Body of pancreas (tissue), 4 donors: ENCODE measurements at regions of chr9 and their contacts with region 1.

Region 1: DNA sequence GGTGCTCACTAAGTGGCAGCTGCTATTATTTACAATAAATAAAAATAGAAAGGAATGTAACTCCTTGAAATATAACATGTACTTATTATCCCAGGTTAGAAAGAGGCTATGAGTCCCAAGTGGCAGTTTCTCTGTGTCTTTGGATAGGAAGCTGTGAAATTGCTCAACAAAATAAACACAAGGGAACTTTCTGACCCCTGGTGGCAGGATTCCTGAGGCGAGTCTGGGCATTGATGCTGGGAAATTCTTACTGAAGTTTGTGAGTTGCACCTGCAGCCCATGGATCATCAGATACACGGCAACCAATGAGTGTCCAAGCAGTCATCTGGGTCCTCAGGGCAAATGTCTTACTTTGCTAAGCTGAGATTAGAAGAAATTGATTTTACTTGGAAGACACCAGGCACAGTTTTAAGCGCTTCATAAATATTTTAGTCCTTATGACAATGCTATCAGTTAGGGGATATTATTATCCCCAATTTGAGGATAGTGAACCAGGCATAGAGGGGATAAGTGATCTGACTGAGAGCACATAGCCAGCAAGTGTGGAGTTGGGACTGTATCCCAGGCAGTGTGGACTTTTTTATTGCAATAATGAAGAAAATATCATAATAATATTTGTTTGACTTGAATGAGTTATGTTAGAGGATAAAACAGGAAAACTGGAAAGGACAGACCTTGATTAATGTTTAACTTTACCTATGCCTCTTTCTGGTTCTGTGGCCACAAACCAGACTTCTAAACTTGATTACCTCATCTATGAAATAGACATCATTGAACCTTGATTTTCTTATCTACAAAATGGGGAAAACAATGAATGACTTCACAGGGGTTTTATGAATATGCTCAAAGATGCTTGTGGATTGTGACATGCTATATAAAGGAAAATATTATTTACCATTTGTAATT is 265.5 kb upstream of the ADAMTSL1 start:
- DNase-seq: peak; percentile 45 to 70 (median 66)
- ATAC-seq: peak; percentile 79
- H3K4me3 ChIP-seq: no peak overlapping the region
- H3K27ac ChIP-seq: peak overlapping the region in 1 of 4 donors; percentile 49
- H3K4me1 ChIP-seq: peaks cover 15% of the 10 kb centered on the region
- H3K27me3 ChIP-seq: no peaks in the 10 kb centered on the region
- CTCF ChIP-seq: peak; percentile 44 to 70 (median 67)
- POLR2A ChIP-seq: no peak

Region 2: DNA sequence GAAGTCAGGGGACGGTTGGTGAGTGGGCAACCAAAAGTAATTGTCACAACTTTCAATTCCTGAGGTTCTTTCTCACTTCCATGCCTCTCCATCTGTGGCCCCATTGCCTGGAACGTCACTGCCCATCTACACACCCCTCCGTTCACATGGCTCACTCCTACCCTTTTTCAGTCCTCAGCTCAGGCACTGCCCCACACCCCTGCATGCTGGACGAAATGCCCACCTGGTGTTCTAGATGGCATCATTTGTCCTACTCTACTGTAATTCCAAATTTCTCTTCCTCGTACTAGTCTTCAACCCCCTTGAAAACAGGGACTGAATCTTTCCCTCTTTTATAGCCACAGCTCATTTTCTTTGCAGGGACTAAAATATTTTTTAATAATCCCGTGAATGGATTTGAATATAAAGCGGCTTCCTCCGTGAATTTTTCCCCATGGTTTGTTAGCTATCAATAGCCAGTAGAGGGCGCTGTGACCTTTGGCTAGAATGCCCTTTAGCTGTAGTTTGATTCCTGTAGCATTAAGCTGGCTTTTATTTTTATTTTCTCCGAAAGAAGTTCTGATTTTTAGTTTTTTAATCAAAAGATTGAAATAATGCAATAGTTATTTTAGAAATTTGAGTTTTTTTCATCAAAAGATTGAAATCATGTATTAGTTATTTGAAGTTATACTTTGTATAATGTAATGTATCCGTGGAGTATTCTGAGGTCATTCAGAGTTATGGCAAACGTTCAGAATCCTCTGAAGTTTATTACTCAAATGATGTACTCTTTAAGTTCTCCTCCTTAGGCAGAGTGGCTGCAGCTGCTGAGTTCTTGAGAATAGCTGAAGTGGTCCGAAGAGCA is 397.5 kb before region 1 on chr9:
- intact Hi-C with region 1: loop called (anchors 5 kb)
- DNase-seq: peak; percentile 57 to 66 (median 63)
- ATAC-seq: no peak
- H3K4me3 ChIP-seq: no peak overlapping the region
- H3K27ac ChIP-seq: no peak overlapping the region
- H3K4me1 ChIP-seq: peaks cover 15% of the 10 kb centered on the region
- H3K27me3 ChIP-seq: no peaks in the 10 kb centered on the region
- CTCF ChIP-seq: peak; percentile 57 to 96 (median 85)
- POLR2A ChIP-seq: no peak

Region 3: GRCh38 chr9:17888066-17888465 is 320.3 kb before region 1 on chr9:
- intact Hi-C with region 1: no loop called
- DNase-seq: no peak
- ATAC-seq: no peak
- H3K4me3 ChIP-seq: no peak overlapping the region
- H3K27ac ChIP-seq: no peak overlapping the region
- H3K4me1 ChIP-seq: no peaks in the 10 kb centered on the region
- H3K27me3 ChIP-seq: no peaks in the 10 kb centered on the region
- CTCF ChIP-seq: no peak
- POLR2A ChIP-seq: no peak

Region 4: GRCh38 chr9:18333157-18333556 is 124.8 kb after region 1 on chr9:
- intact Hi-C with region 1: no loop called
- DNase-seq: no peak
- ATAC-seq: no peak
- H3K4me3 ChIP-seq: no peak overlapping the region
- H3K27ac ChIP-seq: no peak overlapping the region
- H3K4me1 ChIP-seq: no peaks in the 10 kb centered on the region
- H3K27me3 ChIP-seq: no peaks in the 10 kb centered on the region
- CTCF ChIP-seq: no peak
- POLR2A ChIP-seq: no peak

Region 5: GRCh38 chr9:18390393-18390792 is 182.0 kb after region 1 on chr9:
- intact Hi-C with region 1: no loop called
- DNase-seq: no peak
- ATAC-seq: no peak
- H3K4me3 ChIP-seq: no peak overlapping the region
- H3K27ac ChIP-seq: no peak overlapping the region
- H3K4me1 ChIP-seq: peaks cover 13% of the 10 kb centered on the region
- H3K27me3 ChIP-seq: no peaks in the 10 kb centered on the region
- CTCF ChIP-seq: no peak
- POLR2A ChIP-seq: no peak